Activated CD4-positive, alpha-beta memory T cell treated with anti-CD3 and anti-CD28 coated beads for 36 hours (primary cell): ENCODE measurements at regions of chr11 and their contacts with region 1.

Region 1: DNA sequence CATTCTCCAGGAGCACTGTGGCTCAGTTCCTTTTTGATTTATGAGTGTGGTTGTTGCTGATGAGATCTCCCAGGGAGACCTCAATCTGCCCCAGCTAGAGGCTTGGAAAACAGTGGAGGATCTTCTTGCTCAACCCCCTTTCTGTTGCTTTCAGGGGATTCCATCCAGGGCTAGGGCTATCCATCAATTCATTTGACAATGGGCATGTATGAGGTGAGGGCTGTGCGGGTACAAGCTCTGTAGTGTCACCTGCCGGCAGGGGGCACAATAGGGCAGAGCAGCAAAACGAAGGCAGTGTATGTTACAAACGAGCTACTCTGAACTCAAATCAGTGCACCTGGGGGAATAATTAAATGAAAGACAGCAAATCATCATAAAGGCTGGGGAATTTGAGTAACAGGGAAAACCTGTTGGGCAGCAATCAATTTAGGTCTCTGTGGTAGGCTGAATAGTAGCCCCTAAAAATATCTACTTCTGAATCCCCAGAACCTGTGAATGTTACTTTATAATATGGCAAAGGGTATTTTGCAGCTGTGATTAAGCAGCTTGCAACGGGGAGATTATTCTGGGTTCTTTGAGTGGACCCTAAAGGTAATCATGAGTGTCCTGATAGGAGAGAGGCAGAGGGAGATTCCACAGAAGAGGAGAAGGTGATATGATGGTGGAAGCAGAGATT is 170.3 kb upstream of the ZBED5 start:
- DNase-seq: peak; percentile 83
- H3K4me3 Mint-ChIP-seq: no peak overlapping the region
- H3K27ac Mint-ChIP-seq: no peak overlapping the region
- H3K4me1 Mint-ChIP-seq: no peaks in the 10 kb centered on the region
- H3K27me3 Mint-ChIP-seq: no peaks in the 10 kb centered on the region

Region 2: GRCh38 chr11:10943968-10944367 is 84.2 kb before region 1 on chr11:
- CTCF ChIA-PET with region 1: interaction called, 15 read pairs
- POLR2A ChIA-PET with region 1: no interaction called
- intact Hi-C with region 1: no loop called
- DNase-seq: no peak
- H3K4me3 Mint-ChIP-seq: no peak overlapping the region
- H3K27ac Mint-ChIP-seq: no peak overlapping the region
- H3K4me1 Mint-ChIP-seq: no peaks in the 10 kb centered on the region
- H3K27me3 Mint-ChIP-seq: peaks cover 5% of the 10 kb centered on the region

Region 3: GRCh38 chr11:11016068-11016467 is 12.1 kb before region 1 on chr11:
- CTCF ChIA-PET with region 1: interaction called, 16 read pairs
- POLR2A ChIA-PET with region 1: no interaction called
- intact Hi-C with region 1: no loop called
- DNase-seq: no peak
- H3K4me3 Mint-ChIP-seq: no peak overlapping the region
- H3K27ac Mint-ChIP-seq: no peak overlapping the region
- H3K4me1 Mint-ChIP-seq: no peaks in the 10 kb centered on the region
- H3K27me3 Mint-ChIP-seq: peaks cover 2% of the 10 kb centered on the region

Region 4: DNA sequence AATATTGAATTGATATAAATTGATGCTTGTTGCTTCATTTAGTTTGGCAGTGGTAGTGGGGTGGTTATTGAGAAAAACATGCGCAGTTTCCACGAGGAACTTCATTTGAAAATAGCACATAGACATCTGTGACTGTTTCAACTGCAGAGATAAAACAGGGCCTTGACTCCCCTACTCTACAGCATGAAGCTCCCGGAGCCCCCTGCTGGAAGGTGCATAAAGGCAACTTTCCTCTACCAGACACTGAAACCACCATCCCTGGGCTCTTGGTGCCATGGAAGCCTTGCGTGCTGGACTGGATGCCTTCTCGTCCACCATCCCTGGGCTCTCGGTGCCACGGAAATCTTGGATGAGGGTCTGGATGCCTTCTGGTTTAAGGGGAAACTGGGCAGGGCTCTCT is 129.0 kb after region 1 on chr11:
- CTCF ChIA-PET with region 1: interaction called, 18 read pairs
- POLR2A ChIA-PET with region 1: no interaction called
- intact Hi-C with region 1: loop called (anchors 2 kb)
- DNase-seq: peak; percentile 59
- H3K4me3 Mint-ChIP-seq: no peak overlapping the region
- H3K27ac Mint-ChIP-seq: no peak overlapping the region
- H3K4me1 Mint-ChIP-seq: peaks cover 14% of the 10 kb centered on the region
- H3K27me3 Mint-ChIP-seq: peaks cover 2% of the 10 kb centered on the region

Region 5: DNA sequence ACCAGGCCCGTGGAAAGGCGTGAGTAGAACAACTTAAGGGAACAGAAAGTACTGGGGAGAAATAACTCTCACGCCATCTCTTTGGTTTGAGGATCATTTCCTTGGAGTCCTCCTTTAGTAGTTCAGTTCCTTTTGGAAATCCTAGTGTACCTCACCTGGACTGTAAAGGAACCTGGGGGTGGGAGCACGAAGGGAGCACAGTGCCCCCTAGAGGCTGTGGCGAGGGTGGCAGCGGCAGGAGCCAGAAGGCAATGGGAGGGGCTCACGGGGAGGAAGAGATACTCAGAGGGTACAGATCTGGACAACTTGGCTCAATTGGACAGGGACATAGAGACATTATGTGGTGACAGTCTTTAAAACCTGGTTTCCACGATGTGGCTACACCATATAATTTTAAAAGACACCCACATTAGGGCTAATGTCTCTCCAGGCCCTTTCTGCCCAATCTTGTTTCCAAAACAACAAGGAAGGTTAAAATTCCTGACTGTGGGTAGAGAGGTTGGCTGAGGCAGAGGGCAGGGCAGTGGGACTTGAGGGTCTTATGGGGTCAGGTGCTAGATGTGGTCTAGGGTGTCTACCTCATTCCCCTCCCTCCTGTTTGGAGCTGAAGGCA is 237.9 kb after region 1 on chr11:
- CTCF ChIA-PET with region 1: interaction called, 43 read pairs
- POLR2A ChIA-PET with region 1: no interaction called
- intact Hi-C with region 1: loop called (anchors 1 kb)
- DNase-seq: peak; percentile 79
- H3K4me3 Mint-ChIP-seq: no peak overlapping the region
- H3K27ac Mint-ChIP-seq: no peak overlapping the region
- H3K4me1 Mint-ChIP-seq: no peaks in the 10 kb centered on the region
- H3K27me3 Mint-ChIP-seq: no peaks in the 10 kb centered on the region